HCT116 (cell line): ENCODE measurements at regions of chr6 and their contacts with region 1.

Region 1: DNA sequence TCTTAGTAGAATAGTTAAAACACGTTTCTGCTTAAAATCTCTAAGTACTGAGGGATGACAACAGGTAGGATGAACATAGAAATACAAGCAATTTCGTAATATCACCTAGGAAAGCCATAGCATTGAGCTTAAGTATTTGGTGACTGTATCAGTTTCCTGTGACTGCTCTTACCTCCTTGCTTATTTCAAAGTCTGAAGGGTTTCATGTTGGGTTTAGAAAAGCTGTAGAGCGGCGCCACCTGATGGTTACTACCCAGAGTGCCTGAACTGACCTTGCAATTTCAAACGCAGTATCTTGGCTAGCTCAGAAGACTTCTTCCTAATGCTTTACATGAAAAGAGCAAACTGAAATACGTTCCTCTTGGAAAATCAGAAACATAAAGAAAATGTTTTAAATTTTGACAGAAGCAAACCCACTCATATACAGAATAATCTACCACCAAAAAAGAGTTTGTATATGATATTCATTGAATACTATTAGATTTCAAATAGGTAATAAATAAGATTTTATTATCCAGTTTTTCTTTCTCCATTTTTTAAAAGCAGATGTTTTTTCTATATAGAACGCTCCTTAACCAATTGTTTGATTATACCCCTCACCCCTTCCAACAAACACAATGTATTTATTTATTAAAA is 82.3 kb upstream of the RIPOR2 start:
- DNase-seq: peak; percentile 53
- ATAC-seq: peak; percentile 68
- H3K4me3 ChIP-seq: no peak overlapping the region
- H3K27ac ChIP-seq: no peak overlapping the region
- H3K4me1 ChIP-seq: peaks cover 0 to 4% of the 10 kb centered on the region in 2 experiments; a peak in 1 of 4 replicates
- H3K27me3 ChIP-seq: no peaks in the 10 kb centered on the region
- CTCF ChIP-seq: peak; percentile 62 to 78 (median 66); a peak in 5 of 6 replicates
- POLR2A ChIP-seq: no peak
- RAD21 ChIP-seq: peak; percentile 82

Region 2: DNA sequence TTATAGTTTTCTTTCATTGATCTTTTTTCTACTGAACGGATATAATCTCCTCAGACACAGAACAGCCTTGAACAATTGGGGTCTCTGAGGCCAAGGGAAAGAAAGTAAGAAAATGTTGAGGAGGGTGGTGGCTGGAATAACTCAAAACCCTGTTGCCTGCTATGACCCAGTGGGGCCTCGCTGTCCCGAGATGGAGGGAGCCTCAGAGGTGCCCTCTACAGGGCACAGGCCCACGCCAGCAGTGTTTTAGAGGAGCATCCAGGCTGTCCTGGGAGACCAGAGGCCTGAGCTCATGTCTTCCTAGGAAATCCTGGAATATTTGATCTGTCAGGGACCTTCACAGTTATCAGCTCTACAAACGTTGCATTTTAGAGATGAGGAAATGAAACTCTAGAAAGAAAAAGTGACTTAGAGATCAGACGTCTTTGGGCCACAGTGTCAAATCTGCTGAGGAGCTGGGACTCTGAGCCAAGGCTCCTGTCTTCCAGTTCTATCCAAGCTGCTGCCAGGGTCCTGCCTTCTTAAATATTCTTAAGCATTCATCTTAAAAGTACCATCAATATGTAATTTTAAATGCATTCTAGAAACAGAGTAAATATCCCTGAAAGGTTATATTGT is 497.0 kb before region 1 on chr6:
- CTCF ChIA-PET with region 1: interaction called, 5 read pairs
- POLR2A ChIA-PET with region 1: no interaction called
- RAD21 ChIA-PET with region 1: no interaction called
- intact Hi-C with region 1: loop called (anchors 10 kb)
- DNase-seq: peak; percentile 23
- ATAC-seq: peak; percentile 100
- H3K4me3 ChIP-seq: no peak overlapping the region
- H3K27ac ChIP-seq: no peak overlapping the region
- H3K4me1 ChIP-seq: no peaks in the 10 kb centered on the region
- H3K27me3 ChIP-seq: no peaks in the 10 kb centered on the region
- CTCF ChIP-seq: peak; percentile 50 to 94 (median 85); a peak in 5 of 6 replicates
- POLR2A ChIP-seq: no peak
- RAD21 ChIP-seq: peak; percentile 50

Region 3: GRCh38 chr6:24581084-24581669 is 436.9 kb before region 1 on chr6:
- CTCF ChIA-PET with region 1: interaction called, 11 read pairs
- POLR2A ChIA-PET with region 1: no interaction called
- RAD21 ChIA-PET with region 1: interaction called in 1 of 2 experiments, 3 read pairs
- intact Hi-C with region 1: loop called (anchors 5 kb)
- DNase-seq: peak; percentile 64
- ATAC-seq: peak; percentile 87
- H3K4me3 ChIP-seq: no peak overlapping the region
- H3K27ac ChIP-seq: no peak overlapping the region
- H3K4me1 ChIP-seq: peaks cover 3 to 13% of the 10 kb centered on the region in 2 experiments; a peak in 3 of 4 replicates
- H3K27me3 ChIP-seq: no peaks in the 10 kb centered on the region
- CTCF ChIP-seq: peak; percentile 68 to 90 (median 89)
- POLR2A ChIP-seq: no peak
- RAD21 ChIP-seq: peak; percentile 77

Region 4: GRCh38 chr6:24699521-24700359 is 318.3 kb before region 1 on chr6:
- CTCF ChIA-PET with region 1: no interaction called
- POLR2A ChIA-PET with region 1: no interaction called
- RAD21 ChIA-PET with region 1: no interaction called
- intact Hi-C with region 1: loop called (anchors 10 kb)
- DNase-seq: no peak
- ATAC-seq: no peak
- H3K4me3 ChIP-seq: no peak overlapping the region
- H3K27ac ChIP-seq: no peak overlapping the region
- H3K4me1 ChIP-seq: no peaks in the 10 kb centered on the region
- H3K27me3 ChIP-seq: no peaks in the 10 kb centered on the region
- CTCF ChIP-seq: no peak
- POLR2A ChIP-seq: no peak
- RAD21 ChIP-seq: no peak

Region 5: DNA sequence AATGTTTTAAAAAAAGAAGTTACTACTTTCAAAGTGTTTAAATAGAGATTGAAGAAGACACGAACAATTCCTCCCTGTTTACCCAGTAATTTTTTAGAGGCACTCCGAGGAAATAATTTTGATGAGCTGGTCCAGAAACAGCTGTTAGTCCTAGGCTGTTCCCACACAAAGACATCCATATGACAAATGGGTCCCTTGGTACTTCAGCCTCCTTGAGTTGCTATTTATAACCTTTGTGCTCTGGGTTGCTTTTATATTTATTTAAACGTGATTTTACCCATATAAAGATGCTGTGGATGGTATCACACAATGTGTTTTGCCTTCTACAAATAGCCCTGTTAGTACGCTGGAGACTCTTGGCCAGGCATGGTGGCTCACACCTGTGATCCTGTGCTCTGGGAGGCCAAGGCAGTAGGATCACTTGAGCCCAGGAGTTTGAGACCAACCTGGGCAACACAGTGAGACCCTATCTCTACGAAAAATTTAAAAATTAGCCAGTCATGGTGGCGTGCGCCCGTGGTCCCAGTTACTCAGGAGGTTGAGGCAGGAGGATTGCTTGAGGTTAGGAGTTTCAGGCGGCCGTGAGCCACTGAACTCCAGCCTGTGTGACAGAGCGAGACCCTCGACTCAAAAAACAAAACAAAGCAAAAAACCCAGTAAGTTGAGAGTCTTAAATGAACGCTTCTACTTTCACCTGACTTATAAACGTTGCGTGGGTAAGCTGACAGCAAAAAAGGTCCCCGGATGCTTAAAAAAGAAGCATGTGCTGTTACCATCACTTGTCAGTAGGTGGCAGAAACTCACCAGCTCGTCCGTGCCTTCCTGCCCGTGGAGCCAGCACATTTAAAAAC is 162.4 kb before region 1 on chr6:
- CTCF ChIA-PET with region 1: interaction called, 66 read pairs
- POLR2A ChIA-PET with region 1: interaction called, 7 read pairs
- RAD21 ChIA-PET with region 1: interaction called, 4 to 6 read pairs
- intact Hi-C with region 1: loop called (anchors 1 kb)
- DNase-seq: peak; percentile 54
- ATAC-seq: peak; percentile 94
- H3K4me3 ChIP-seq: peak overlapping the region; percentile 2 to 39
- H3K27ac ChIP-seq: no peak overlapping the region
- H3K4me1 ChIP-seq: peaks cover 3 to 10% of the 10 kb centered on the region in 2 experiments; a peak in 2 of 4 replicates
- H3K27me3 ChIP-seq: peaks cover 1% of the 10 kb centered on the region; the same call in 1 of the 2 replicates
- CTCF ChIP-seq: peak; percentile 79 to 85 (median 85)
- POLR2A ChIP-seq: no peak
- RAD21 ChIP-seq: peak; percentile 90

Region 6: DNA sequence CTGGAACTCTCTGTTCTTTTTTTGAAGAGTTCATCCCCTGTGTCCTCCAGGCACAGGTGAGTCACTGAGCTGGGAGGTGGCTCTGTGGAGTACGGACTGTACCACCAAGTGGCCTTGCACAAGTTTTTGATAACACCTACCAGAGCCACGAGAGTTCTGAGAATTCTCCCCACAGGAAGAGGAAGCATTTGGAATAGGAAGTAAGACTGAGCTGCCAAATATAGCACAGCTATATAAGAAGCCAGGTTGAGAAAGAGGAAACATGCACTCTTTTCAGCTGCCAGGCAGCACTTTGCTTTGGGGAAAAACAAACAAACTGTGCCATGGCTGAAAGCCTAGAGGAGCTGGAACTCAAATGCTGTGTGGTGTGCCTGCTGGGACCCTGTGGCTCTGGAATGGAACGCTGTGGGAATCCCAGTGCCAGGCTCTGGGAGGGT is 11.5 kb before region 1 on chr6:
- CTCF ChIA-PET with region 1: interaction called, 10 read pairs
- POLR2A ChIA-PET with region 1: no interaction called
- RAD21 ChIA-PET with region 1: no interaction called
- intact Hi-C with region 1: no loop called
- DNase-seq: peak; percentile 7
- ATAC-seq: peak; percentile 86
- H3K4me3 ChIP-seq: no peak overlapping the region
- H3K27ac ChIP-seq: no peak overlapping the region
- H3K4me1 ChIP-seq: peaks cover 7 to 12% of the 10 kb centered on the region in 2 experiments; a peak in 3 of 4 replicates
- H3K27me3 ChIP-seq: no peaks in the 10 kb centered on the region
- CTCF ChIP-seq: no peak
- POLR2A ChIP-seq: no peak
- RAD21 ChIP-seq: no peak